Right ventricle myocardium inferior (tissue), 1 donor: ENCODE measurements at regions of chr1 and their contacts with region 1.

Region 1: GRCh38 chr1:203625628-203626019 is 1.0 kb upstream of the ATP2B4 start:
- DNase-seq: no peak
- ATAC-seq: peak; percentile 41

Region 2: GRCh38 chr1:203273206-203273868 is 352.3 kb before region 1 on chr1:
- intact Hi-C with region 1: loop called (anchors 10 kb)
- DNase-seq: peak; percentile 93
- ATAC-seq: peak; percentile 66

Region 3: DNA sequence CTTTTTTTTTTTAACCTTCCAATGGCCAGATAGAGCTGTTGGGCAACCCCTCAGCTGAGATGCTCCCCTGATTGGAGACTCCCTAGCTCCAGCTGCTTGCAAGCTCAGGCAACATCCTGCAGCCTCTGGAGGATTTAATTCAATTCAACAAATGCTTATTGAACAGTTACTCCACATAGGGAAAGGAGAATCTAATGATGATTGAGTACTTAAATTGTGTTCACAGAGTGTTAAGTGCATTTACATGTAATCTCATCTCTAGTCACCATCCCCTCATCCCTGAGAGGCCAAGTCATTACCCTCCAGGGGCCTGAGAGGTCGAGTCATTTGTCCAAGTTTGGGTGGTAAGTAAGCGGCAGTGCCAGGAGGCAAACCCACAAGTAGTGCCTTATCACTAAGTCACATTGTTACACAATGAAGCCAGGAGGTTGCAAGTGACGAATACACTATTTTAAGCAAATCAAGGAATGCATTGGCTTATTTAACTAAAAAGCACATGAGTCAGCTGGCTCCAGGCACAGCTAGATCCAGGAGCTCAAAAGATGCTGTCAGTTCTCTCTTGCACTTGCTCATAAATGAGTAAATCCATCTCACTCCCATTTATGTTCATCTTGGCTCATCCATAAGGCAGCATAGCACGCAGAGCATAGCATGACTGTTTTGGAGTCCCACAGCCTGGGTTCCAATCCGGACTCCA is 67.4 kb before region 1 on chr1:
- intact Hi-C with region 1: loop called (anchors 2 kb)
- DNase-seq: no peak
- ATAC-seq: peak; percentile 59

Region 4: GRCh38 chr1:203692565-203693470 is 67.2 kb after region 1 on chr1:
- intact Hi-C with region 1: loop called (anchors 1 kb)
- DNase-seq: peak; percentile 86
- ATAC-seq: peak; percentile 90

Region 5: DNA sequence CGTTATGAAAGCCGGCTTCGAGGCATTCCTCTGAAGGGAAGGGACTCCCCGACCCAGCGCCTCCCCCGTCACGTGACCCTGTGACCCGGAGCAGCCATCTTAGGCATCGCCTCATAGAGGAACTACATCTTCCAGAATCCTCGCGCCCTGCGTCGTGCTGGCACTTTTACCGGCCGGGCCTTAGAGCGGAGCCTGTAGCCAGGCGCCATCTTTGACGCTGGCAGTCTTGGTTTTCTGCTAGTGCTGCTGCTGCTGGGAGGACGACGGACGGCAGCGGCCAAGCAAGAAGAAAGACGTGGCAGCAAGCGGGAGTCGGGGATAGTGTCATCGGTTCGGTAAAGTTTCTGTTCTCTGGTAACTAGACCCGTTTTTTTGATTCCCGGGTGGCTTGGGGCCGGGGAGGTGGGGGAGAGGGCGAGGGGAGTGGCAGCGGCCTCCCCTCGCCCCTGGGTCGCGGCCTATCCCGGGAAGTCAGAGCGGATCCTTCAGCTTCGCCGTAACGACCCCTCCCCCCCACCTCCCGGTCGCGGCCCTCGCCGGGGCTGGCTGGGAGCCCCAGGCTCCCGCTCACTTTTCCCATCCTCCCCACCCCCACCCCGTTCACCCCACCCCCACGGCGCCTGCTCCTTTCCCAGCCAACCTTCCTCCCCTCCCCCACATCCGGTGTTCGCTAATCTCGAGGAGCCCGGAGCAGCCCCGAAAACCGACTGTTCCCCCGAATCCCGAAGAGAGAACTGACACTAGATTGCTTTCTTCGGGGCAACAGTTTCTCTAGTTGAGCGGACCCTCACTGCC is 170.0 kb after region 1 on chr1 and contains the starts of genes ZBED6 and ZC3H11A:
- intact Hi-C with region 1: loop called (anchors 10 kb)
- DNase-seq: peak; percentile 99
- ATAC-seq: peak; percentile 98
- total RNA-seq, gene ZBED6: 13.0 TPM
- total RNA-seq, gene ZC3H11A: 54.4 TPM